Gastrocnemius medialis (tissue), 4 donors: ENCODE measurements at regions of chr17 and their contacts with region 1.

Region 1: GRCh38 chr17:57892146-57892828 is 42.4 kb upstream of the MRPS23 start:
- DNase-seq: peak; percentile 77 to 95
- ATAC-seq: peak; percentile 24 to 26
- H3K4me3 ChIP-seq: no peak overlapping the region
- H3K27ac ChIP-seq: peak overlapping the region; percentile 94 to 100 (median 98)
- H3K4me1 ChIP-seq: peaks cover 86 to 90% of the 10 kb centered on the region in 2 donors
- H3K27me3 ChIP-seq: no peaks in the 10 kb centered on the region
- CTCF ChIP-seq: peak; percentile 98 to 99 (median 99)
- POLR2A ChIP-seq: no peak

Region 2: DNA sequence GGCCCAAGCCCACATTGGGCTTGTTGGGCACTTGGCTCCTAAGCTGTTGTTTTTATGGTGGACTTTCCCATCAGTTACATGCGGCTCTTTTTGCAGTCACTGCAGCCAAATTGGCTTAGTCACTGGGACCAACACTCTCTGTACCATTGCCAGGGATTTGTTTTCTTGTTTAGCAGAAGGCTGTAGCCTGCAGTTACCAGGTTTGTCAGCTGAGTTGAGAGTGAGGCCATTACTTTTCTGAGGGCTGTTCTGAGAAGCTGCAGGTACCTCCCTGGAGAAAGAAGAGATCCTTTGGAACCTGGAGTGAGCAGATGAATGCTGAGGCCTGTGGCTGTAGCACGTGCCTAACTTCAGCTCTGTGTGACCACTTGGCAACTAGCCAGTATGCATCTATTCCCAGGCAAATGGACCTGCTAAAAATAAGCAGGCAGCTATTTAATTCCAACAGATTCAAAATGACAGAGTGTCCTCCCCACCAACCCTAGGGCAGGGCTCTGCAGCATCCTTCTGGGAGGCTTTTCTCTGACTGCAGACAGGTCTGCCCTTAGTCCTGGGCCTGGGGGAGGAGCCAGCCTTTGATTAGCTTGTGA is 794.4 kb before region 1 on chr17:
- in situ Hi-C with region 1: no loop called
- intact Hi-C with region 1: loop called (anchors 5 kb)
- DNase-seq: peak; percentile 75 to 82
- ATAC-seq: peak; percentile 74 to 87
- H3K4me3 ChIP-seq: no peak overlapping the region
- H3K27ac ChIP-seq: peak overlapping the region; percentile 91 to 99 (median 94)
- H3K4me1 ChIP-seq: peaks cover 92 to 98% of the 10 kb centered on the region in 2 donors
- H3K27me3 ChIP-seq: no peaks in the 10 kb centered on the region
- CTCF ChIP-seq: no peak
- POLR2A ChIP-seq: peak; percentile 37 to 59

Region 3: DNA sequence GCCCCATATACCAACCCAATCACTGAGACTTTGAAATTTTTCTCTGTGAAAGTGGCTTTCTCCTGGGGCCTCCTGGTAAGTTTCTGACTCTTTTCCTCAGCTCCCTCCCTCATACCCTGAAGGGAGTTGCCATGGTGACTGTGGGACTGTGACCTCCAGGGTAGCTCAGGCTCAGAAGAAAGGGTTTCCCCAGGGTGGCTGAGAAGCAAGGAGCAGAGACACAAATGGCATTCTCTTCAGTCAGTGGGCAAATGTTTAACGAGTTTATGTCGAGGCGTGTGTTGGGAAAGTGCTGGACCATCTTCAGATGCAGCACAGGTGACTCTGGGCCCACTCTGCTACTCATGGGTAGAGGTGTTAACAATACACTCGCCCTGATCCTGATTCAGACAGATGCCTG is 89.3 kb before region 1 on chr17:
- in situ Hi-C with region 1: no loop called
- intact Hi-C with region 1: no loop called
- DNase-seq: no peak
- ATAC-seq: no peak
- H3K4me3 ChIP-seq: no peak overlapping the region
- H3K27ac ChIP-seq: no peak overlapping the region
- H3K4me1 ChIP-seq: peaks cover 0 to 3% of the 10 kb centered on the region in 2 donors
- H3K27me3 ChIP-seq: no peaks in the 10 kb centered on the region
- CTCF ChIP-seq: no peak
- POLR2A ChIP-seq: no peak

Region 4: DNA sequence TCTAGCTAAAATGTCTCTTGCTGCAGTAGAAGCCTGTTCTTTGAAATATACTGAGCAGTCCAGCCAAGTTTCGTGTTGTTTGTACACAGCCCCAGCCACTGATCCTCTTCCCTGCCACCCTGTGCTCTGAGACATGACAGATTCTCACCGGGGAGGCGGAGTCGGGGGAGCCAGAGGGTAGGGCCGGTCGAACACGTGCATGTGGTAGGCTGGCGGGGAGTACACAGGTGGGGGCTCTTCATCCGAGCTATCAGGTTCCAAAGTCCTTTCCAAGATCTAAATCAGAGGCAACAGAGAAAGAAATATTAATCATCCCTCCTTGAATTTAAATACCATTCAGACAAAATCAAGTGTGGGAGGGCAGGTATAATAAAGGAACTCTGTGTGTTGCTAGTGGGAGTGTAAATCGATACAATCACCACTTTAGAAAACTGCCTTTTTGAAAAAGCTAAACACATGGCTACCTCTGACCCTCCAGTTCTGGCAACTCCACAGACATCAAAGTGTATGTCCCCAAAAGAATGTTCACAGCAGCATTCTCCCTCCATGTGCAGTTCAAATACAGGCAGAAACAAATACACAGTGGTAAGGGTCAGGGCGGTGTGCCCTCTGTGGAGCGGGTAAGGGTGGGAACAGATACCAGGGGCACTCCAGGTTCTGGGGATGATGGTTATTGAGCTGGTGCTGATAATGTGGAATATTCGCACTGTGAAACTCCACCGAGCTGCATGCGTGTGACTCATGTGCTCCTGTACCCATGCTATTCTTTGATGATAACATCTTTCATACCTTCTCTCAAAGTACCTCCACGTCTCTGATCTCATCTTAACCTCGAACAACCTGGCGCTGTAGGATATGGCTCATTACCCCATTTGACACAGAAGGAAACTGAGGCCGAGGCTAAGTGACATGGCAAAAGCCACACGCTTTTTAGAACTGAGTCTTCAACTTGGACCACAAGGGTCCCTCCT is 12.5 kb before region 1 on chr17:
- in situ Hi-C with region 1: no loop called
- intact Hi-C with region 1: loop called (anchors 1 kb)
- DNase-seq: peak; percentile 77 to 83
- ATAC-seq: peak; percentile 64 to 71
- H3K4me3 ChIP-seq: no peak overlapping the region
- H3K27ac ChIP-seq: peak overlapping the region; percentile 79 to 89 (median 83)
- H3K4me1 ChIP-seq: peaks cover 62 to 75% of the 10 kb centered on the region in 2 donors
- H3K27me3 ChIP-seq: no peaks in the 10 kb centered on the region
- CTCF ChIP-seq: no peak
- POLR2A ChIP-seq: no peak

Region 5: DNA sequence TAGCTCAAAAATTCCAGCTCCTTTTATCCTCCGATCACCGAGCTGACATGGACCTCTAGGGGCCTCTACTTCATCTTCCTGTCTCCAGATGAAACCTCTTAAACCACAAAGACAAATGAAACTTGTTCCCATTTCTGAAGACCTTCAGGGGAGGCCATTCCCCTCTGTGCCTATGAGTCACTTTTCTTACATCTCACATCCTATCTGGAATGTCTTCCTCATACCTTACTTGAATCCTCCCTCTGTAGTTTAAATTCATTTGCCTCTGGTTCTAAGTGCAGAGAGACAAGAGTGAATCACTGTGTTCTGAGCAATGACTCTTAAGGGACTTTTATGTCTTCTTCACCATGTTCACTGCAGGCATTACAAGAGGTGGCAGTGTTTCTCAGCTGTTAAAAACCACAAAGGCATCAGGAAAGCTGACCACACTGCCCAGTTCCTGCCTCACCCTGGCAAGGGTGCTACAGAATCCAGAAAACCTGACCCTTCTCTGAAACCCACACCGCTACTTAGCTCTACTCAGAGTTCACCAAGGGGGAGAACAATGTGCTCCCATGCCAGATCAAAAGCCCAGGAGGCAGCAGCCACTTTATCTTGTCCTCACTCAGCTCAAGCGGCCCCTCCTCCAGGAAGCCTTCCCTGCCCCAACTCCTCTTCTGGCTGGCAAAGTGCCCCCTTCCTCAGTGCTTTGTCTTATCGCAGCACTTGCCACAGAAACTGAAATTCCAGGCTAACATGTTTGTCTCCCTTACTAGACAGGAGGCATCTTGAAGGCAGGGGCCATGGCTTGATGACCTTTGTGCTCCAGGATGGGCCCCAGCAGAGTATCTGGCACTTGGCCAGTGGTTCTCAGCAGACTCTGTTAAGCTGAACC is 56.5 kb after region 1 on chr17:
- in situ Hi-C with region 1: no loop called
- intact Hi-C with region 1: loop called (anchors 2 kb)
- DNase-seq: peak; percentile 73 to 85
- ATAC-seq: peak; percentile 71 to 81
- H3K4me3 ChIP-seq: peak overlapping the region in 1 of 4 donors; percentile 6
- H3K27ac ChIP-seq: peak overlapping the region; percentile 82 to 99 (median 98)
- H3K4me1 ChIP-seq: peaks cover 91 to 95% of the 10 kb centered on the region in 2 donors
- H3K27me3 ChIP-seq: no peaks in the 10 kb centered on the region
- CTCF ChIP-seq: no peak
- POLR2A ChIP-seq: peak; percentile 36 to 50

Region 6: DNA sequence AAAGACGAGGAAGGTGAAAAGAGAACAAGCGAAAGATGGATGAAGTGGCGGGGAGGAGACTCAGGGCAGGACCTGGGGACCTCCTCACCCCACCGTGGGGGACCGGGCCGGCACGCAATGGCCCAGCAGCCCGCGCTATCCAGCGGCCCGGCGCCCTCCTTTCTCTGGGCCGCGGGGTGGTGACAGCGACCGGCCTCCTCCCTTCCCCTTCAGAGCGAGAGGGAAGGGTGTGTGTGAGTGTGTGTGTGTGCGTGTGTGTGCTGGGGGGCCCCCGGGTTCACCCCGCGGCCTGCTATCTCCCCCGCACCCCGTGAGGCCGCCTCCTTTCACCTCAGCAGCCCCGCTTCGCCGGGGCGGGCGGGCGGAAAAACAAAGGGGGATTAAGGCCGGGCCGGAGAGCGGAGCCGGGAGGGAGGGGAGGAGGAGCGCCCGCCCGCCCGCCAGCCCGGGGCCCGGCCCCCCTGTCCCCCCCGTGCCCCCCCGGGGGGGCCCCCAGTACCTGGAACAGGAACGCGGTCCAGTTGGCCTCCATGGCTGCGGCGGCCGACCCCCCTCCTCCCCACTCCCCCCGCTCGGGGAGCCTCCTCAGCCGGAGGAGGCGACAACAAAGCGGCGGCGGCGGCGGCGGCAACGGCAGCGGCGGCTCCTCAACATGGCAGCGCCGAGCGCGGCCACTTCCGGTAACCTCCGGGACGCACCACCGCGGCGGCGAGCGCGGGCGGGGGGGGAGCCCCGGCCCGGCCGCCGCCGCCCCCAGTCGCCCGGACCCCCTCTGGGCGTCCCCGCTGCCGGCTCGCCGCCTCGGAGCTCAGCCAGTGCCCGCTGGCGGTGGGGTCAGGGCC is 95.5 kb after region 1 on chr17 and contains the start of gene VEZF1:
- in situ Hi-C with region 1: no loop called
- intact Hi-C with region 1: loop called (anchors 2 kb)
- DNase-seq: peak; percentile 56 to 75
- ATAC-seq: peak; percentile 62 to 67
- H3K4me3 ChIP-seq: peak within 1 kb of the TSS; percentile 67 to 92 (median 81)
- H3K27ac ChIP-seq: peak within 1 kb of the TSS; percentile 95 to 99 (median 98)
- H3K4me1 ChIP-seq: peaks cover 72 to 83% of the 10 kb centered on the region in 2 donors
- H3K27me3 ChIP-seq: no peaks in the 10 kb centered on the region
- CTCF ChIP-seq: no peak
- POLR2A ChIP-seq: peak; percentile 67 to 87
- total RNA-seq, gene VEZF1: 99.9 to 137 (median 106) TPM